A673 (cell line): ENCODE measurements at regions of chr6 and their contacts with region 1.

Region 1: DNA sequence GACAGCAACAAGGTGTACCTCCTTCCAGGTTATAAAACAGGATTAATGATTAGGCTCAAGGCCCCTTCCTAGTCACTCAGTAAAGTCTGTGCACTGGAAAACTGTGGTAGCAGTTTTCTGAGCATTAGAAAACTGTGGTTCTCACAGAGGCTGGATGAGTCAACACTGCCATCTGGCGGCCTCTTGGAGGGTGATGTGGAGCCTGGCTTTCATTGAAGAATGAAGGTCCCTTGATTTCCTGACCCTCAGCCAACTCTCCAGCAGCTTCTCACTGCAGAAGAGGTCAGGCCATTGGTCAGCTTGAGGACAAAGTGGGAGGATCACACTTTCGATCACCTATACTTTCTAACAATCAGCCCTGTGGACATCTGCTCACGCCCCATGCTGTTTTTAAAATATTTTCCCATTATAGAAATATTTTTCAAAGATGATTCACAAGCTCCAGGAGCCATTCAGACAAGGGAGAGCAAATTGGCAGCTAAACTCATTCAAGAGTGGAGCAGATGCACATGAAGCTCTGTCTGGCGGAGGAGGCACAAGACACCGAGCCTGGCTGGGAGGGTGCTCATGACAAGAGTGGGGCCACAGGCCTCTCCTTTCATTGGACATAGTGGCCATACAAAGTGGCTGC is 23.2 kb downstream of the PSMB1 start:
- DNase-seq: peak; percentile 75
- H3K4me3 ChIP-seq: no peak overlapping the region
- H3K27ac ChIP-seq: no peak overlapping the region
- H3K4me1 ChIP-seq: no peaks in the 10 kb centered on the region
- H3K27me3 ChIP-seq: no peaks in the 10 kb centered on the region
- CTCF ChIP-seq: peak; percentile 88

Region 2: DNA sequence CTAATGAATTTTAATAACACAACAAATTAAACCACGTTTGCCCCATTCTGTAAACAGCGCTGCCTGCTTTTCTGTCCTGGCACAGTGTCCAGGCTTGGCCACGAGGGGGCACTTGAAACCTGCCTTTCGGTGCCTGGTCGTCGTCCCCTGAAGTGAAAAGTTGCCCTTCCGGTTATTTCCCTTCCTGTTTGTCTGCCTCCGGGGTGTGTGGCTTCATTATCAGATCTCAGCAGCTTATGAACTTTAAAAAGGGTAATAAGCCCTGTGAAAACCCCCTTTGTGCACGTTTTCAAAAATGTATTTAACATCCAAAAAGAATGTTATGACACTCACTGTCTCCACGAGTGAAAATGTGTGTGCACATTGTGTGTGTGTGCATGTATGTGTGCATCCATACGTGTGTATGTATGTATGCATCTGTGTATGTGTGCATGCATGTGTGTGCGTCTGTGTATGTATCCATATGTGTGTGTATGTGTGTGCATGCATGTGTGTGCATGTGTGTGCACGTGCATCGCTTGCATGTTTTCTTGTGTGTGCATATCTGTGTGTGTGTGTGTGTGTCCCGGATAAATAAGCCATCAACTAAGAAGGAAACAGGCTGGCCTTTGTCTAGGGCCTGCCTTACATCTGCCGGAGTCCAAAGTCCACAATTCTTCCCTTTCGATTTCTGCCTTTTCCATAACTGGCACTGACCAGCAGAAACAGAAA is 1634.7 kb before region 1 on chr6:
- CTCF ChIA-PET with region 1: no interaction called
- POLR2A ChIA-PET with region 1: no interaction called
- intact Hi-C with region 1: loop called (anchors 5 kb)
- DNase-seq: peak; percentile 83
- H3K4me3 ChIP-seq: no peak overlapping the region
- H3K27ac ChIP-seq: no peak overlapping the region
- H3K4me1 ChIP-seq: no peaks in the 10 kb centered on the region
- H3K27me3 ChIP-seq: peaks cover 12% of the 10 kb centered on the region
- CTCF ChIP-seq: peak; percentile 95

Region 3: DNA sequence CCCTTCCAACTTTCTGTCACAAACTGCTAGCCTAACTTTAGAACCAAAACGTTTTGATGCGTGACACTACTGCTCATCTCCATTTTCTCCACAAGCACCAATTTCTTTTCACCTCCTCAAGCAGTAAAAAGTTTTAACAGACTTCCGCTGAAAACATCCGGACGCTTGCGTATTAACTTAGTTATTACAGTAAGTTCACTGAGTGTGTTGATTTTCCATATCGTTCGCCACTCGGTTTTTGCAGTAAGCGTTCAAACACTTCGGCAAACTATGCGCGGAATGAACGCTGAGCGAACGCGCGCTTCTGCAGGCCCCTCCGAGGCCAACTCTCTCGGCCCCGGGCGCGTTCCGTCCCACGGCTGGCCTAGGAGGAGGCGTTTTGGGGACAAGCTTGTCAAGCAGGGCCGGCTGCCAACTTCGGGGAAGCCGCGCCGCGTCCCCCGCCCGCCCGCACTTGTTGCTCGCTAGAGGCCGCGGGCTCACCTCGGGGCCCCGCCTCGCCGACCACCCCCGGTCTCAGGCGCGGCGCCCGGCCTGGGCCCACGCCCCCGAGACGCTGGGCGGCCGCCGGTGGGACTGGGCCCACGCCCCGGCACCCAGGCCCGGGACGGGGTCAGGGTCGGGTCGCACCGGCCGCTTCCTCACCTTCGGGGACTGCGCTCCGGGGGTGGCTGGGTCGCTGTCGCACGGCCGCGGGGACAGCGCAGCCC is 806.6 kb before region 1 on chr6:
- CTCF ChIA-PET with region 1: no interaction called
- POLR2A ChIA-PET with region 1: no interaction called
- intact Hi-C with region 1: loop called (anchors 5 kb)
- DNase-seq: peak; percentile 84
- H3K4me3 ChIP-seq: peak overlapping the region; percentile 92
- H3K27ac ChIP-seq: peak overlapping the region; percentile 82
- H3K4me1 ChIP-seq: peaks cover 28% of the 10 kb centered on the region
- H3K27me3 ChIP-seq: no peaks in the 10 kb centered on the region
- CTCF ChIP-seq: no peak

Region 4: DNA sequence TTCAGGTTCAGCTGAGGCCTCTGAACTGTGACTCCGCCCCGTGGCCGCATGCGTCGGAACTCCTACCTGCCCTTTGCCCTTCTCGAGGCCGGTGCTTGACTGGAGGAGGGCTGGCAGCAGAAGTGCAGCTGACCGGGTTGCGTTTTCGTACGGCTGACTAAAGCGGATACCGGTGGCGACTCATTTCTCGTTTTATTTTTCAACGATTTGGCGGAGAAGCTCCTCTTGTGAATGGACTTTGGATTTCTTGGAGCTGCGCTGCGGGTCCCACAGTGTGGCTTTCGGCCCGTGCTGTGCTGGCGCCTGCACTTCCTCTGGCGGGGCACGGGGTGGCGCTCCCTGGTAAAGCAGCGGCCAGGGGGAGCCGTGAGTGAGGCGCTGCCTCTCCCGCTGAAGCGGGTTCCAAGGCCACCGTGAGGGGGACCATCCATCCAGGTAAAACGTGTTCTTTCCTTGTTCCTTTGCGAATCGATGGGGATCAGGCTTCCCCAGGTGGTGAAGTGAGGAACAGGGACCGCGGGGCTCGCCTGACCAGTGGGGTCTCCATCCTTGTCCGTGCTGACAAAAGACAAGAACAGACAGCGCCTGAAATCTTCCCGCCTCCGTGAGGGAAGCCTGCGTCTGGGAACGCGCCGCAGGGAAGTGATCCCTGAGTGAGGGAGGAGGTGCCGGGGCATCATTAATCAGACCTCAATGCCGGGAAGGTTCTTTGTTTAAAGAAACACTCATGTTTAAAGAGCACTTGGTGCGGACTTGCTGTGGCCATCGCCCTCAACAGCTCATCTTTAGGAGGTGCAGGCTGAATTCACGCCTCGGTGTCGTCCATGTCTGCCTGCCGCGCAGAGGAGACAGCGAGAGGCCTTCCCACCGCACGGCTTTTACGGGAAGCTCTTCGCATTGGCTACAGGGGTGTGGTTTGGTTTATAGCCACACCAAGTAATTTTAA is 739.7 kb before region 1 on chr6:
- CTCF ChIA-PET with region 1: interaction called, 3 read pairs
- POLR2A ChIA-PET with region 1: no interaction called
- intact Hi-C with region 1: loop called (anchors 5 kb)
- DNase-seq: peak; percentile 81
- H3K4me3 ChIP-seq: peak overlapping the region; percentile 44
- H3K27ac ChIP-seq: no peak overlapping the region
- H3K4me1 ChIP-seq: peaks cover 15% of the 10 kb centered on the region
- H3K27me3 ChIP-seq: no peaks in the 10 kb centered on the region
- CTCF ChIP-seq: peak; percentile 99

Region 5: DNA sequence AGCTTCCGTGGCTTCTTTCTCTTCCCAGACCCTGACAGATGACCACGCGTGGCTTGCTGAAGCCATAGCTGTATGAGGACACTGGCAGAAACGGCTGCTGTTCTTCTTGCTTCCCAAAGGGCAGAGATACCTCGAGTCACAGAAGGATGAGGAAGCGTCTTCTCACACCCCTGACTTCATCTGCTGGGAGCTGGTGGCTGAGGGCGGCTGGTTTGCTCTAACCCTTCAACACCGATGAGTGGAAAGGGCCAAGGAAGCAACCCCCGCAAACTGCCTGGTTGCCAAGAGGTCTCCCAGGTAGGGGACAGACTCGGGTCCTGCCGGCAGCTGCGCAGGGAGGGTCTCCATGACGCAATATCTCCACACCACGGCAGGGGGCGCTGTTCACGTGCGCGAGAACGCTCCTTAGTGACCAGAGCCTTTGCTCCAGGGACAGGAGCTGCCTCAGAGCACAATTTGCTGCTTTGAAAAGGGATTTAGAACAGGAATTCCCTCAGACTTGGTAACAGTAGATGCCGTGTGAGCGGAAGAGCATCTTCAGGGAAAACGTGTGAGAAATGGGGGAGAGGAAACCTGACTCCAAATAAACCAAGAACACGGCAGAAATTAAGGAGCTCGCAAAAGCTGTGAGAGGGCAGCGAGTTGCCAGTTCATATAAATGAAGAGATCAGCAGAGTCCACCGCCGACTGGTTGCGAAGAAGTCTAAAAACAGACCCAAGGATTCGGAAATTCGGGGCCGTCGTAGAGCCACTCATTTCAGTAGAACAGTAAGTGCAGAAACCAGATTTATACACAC is 698.3 kb before region 1 on chr6:
- CTCF ChIA-PET with region 1: no interaction called
- POLR2A ChIA-PET with region 1: no interaction called
- intact Hi-C with region 1: loop called (anchors 5 kb)
- DNase-seq: peak; percentile 90
- H3K4me3 ChIP-seq: peak overlapping the region; percentile 29
- H3K27ac ChIP-seq: peak overlapping the region; percentile 83
- H3K4me1 ChIP-seq: peaks cover 23% of the 10 kb centered on the region
- H3K27me3 ChIP-seq: no peaks in the 10 kb centered on the region
- CTCF ChIP-seq: peak; percentile 93